ENCODE measurements at regions of chr3 and their contacts with region 1.

Region 1: GRCh38 chr3:111717601-111718000 is 122.5 kb upstream of the ZBED2 start:
- DNase-seq: peak; percentile 27
- ATAC-seq: peak; percentile 96
- H3K4me3 Mint-ChIP-seq: no peak overlapping the region
- H3K27ac Mint-ChIP-seq: no peak overlapping the region
- H3K4me1 Mint-ChIP-seq: peaks cover under 1% of the 10 kb centered on the region
- H3K27me3 Mint-ChIP-seq: no peaks in the 10 kb centered on the region
- CTCF ChIP-seq: no peak

Region 2: DNA sequence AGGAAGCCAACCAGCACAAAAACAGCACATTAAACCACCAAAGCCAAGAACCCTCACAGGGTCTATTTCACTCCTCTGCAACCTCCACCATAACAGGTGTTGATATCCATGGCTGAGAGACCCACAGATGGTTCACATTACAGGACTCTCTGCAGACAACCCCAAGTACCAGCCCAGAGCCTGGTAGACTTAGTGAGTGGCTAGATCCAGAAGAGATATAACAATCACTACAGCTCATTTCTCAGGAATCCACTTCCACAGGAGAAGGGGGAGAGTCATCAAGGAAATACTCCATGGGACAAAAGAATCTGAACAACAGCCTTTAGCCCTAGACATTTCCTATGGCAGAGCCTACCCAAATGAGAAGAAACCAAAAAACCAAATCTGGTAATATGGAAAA is 343.7 kb before region 1 on chr3:
- CTCF ChIA-PET with region 1: no interaction called
- POLR2A ChIA-PET with region 1: no interaction called
- intact Hi-C with region 1: no loop called
- DNase-seq: no peak
- ATAC-seq: no peak
- H3K4me3 Mint-ChIP-seq: no peak overlapping the region
- H3K27ac Mint-ChIP-seq: no peak overlapping the region
- H3K4me1 Mint-ChIP-seq: no peaks in the 10 kb centered on the region
- H3K27me3 Mint-ChIP-seq: no peaks in the 10 kb centered on the region
- CTCF ChIP-seq: no peak

Region 3: GRCh38 chr3:111521891-111522290 is 195.7 kb before region 1 on chr3:
- CTCF ChIA-PET with region 1: no interaction called
- POLR2A ChIA-PET with region 1: no interaction called
- intact Hi-C with region 1: no loop called
- DNase-seq: no peak
- ATAC-seq: no peak
- H3K4me3 Mint-ChIP-seq: no peak overlapping the region
- H3K27ac Mint-ChIP-seq: no peak overlapping the region
- H3K4me1 Mint-ChIP-seq: peaks cover 15% of the 10 kb centered on the region
- H3K27me3 Mint-ChIP-seq: peaks cover 1% of the 10 kb centered on the region
- CTCF ChIP-seq: no peak

Region 4: DNA sequence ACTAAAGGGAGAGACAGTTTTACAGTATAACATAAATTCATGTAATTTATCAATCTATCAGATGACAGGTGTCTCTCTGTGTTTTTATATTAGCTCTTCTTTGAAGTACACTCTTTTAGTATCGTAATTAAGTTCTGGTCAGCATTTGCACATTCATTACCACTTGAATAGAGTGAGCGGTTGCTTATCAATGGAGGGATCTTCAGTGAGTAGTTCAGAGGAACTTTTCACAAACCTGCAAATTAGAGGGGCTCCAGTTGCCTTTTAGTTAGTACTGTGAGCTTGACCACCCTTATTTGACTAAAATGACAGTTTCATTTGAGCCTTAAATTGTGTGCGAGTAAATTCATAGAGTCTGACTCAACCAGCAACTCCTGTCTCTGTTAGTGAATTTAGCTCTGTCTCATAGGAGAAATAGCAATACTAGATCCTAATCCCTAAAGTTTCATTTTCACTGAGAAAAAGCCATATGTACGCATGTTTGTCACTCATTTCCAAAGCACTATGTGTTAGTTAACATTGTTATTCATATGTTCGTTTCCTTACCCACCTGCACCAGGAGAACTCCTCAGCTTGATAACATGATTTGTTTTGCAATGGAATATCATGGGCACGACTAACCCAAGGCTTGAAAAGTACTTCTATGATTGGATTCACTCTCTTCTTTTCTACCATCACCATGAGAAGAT is 65.0 kb before region 1 on chr3:
- CTCF ChIA-PET with region 1: no interaction called
- POLR2A ChIA-PET with region 1: no interaction called
- intact Hi-C with region 1: no loop called
- DNase-seq: no peak
- ATAC-seq: no peak
- H3K4me3 Mint-ChIP-seq: no peak overlapping the region
- H3K27ac Mint-ChIP-seq: no peak overlapping the region
- H3K4me1 Mint-ChIP-seq: peaks cover 53% of the 10 kb centered on the region
- H3K27me3 Mint-ChIP-seq: no peaks in the 10 kb centered on the region
- CTCF ChIP-seq: no peak

Region 5: GRCh38 chr3:111668912-111669488 is 48.6 kb before region 1 on chr3:
- CTCF ChIA-PET with region 1: interaction called, 3 read pairs
- POLR2A ChIA-PET with region 1: no interaction called
- intact Hi-C with region 1: loop called (anchors 1 kb)
- DNase-seq: no peak
- ATAC-seq: peak; percentile 45
- H3K4me3 Mint-ChIP-seq: no peak overlapping the region
- H3K27ac Mint-ChIP-seq: peak overlapping the region; percentile 74
- H3K4me1 Mint-ChIP-seq: peaks cover 41% of the 10 kb centered on the region
- H3K27me3 Mint-ChIP-seq: no peaks in the 10 kb centered on the region
- CTCF ChIP-seq: peak; percentile 46

Region 6: GRCh38 chr3:111691293-111691909 is 26.2 kb before region 1 on chr3:
- CTCF ChIA-PET with region 1: interaction called, 24 read pairs
- POLR2A ChIA-PET with region 1: no interaction called
- intact Hi-C with region 1: loop called (anchors 2 kb)
- DNase-seq: no peak
- ATAC-seq: peak; percentile 45
- H3K4me3 Mint-ChIP-seq: no peak overlapping the region
- H3K27ac Mint-ChIP-seq: no peak overlapping the region
- H3K4me1 Mint-ChIP-seq: peaks cover 34% of the 10 kb centered on the region
- H3K27me3 Mint-ChIP-seq: no peaks in the 10 kb centered on the region
- CTCF ChIP-seq: no peak

Region 7: DNA sequence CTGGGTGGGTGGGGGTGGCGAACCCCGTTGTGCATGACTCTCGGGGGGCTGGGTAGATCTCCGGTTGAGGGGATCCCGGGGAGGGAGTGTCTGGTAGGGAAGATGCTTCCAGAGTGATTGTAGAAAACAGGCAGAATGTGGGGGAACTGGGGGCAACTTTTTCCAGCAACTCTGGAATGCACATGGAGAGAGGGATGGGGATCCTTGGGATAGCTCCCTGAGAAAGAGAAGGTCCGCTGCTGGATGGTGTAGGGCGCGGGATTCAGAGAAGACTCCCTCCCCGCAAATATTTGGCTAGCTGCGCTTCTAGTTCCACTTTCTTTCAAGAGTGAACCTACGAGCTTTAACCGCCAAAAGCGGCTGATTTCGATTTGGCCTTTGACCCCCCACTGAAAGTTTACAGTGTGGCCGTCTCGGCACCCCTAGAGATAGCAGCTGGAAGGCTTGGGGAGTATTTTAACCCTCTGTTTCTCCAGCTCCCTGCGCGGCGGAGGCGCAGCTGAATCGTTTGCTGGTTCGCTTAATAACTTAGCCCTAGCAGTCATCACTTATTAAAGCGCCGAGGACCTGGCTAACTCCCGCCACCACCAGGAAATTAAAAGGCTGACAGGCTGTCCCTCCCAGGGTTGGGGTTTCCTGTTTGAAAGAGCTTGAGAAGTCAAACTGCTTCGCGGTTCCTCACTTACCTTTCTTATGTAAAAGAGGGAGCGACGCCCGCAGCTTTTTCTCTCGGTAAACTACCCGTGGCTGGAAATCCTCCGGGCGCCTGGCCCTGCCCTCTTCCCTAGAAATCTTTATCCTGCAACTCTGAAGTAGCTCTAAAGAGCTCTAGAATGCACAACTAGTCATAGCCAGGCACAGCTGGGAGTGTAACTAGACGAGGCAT is 142.6 kb after region 1 on chr3:
- CTCF ChIA-PET with region 1: interaction called, 39 read pairs
- POLR2A ChIA-PET with region 1: no interaction called
- intact Hi-C with region 1: loop called (anchors 1 kb)
- DNase-seq: peak; percentile 52
- ATAC-seq: peak; percentile 80
- H3K4me3 Mint-ChIP-seq: peak overlapping the region; percentile 91
- H3K27ac Mint-ChIP-seq: peak overlapping the region; percentile 87
- H3K4me1 Mint-ChIP-seq: peaks cover 18% of the 10 kb centered on the region
- H3K27me3 Mint-ChIP-seq: peaks cover 9% of the 10 kb centered on the region
- CTCF ChIP-seq: no peak

Region 8: GRCh38 chr3:111978493-111979433 is 261.2 kb after region 1 on chr3 and contains the start of gene ABHD10:
- CTCF ChIA-PET with region 1: interaction called, 11 read pairs
- POLR2A ChIA-PET with region 1: no interaction called
- intact Hi-C with region 1: no loop called
- DNase-seq: peak; percentile 90
- ATAC-seq: peak; percentile 94
- H3K4me3 Mint-ChIP-seq: peak within 1 kb of the TSS; percentile 93
- H3K27ac Mint-ChIP-seq: peak within 1 kb of the TSS; percentile 94
- H3K4me1 Mint-ChIP-seq: peaks cover 43% of the 10 kb centered on the region
- H3K27me3 Mint-ChIP-seq: no peaks in the 10 kb centered on the region
- CTCF ChIP-seq: no peak
- total RNA-seq, gene ABHD10: 25.2 and 28.4 TPM in 2 replicates

Region 9: GRCh38 chr3:112043603-112044201 is 326.1 kb after region 1 on chr3:
- CTCF ChIA-PET with region 1: interaction called, 8 read pairs
- POLR2A ChIA-PET with region 1: no interaction called
- intact Hi-C with region 1: loop called (anchors 1 kb)
- DNase-seq: no peak
- ATAC-seq: peak; percentile 92
- H3K4me3 Mint-ChIP-seq: no peak overlapping the region
- H3K27ac Mint-ChIP-seq: no peak overlapping the region
- H3K4me1 Mint-ChIP-seq: peaks cover 6% of the 10 kb centered on the region
- H3K27me3 Mint-ChIP-seq: no peaks in the 10 kb centered on the region
- CTCF ChIP-seq: peak; percentile 95

Measured in activated B cell treated with CpG ODN at 0.5 μM for 24 hours (primary cell).